Tibial artery (tissue), 4 donors: ENCODE measurements at regions of chr9 and their contacts with region 1.

Region 1: DNA sequence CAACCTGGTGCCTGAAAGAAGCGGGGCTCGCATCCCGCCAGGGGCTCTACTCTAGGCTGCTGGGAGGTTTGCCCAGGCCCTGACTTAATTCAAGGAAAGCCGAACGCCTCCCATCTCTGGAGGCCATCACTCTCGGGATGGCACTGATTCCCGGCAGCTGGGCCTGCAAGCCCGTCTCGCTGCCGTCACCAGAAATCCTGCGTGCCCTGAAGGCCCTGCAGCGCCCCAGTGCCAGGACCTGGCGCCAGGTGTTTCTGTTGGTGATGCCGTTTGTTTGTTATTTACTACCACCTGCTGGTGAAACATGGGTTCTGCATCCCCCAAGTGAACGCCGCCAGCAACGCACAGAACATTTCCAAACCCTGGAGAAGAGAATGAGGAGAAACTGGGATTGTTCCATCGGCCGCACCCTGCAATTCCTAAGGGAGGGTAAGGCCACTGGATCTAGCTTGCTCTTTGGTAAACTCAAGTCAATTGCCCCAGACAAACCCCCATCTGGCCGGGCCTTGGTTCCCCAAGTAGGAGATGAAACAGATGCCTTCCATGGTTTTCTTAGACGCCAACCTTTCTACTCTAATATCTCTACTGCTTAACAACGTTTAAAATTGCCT is 77.9 kb downstream of the AK8 start:
- DNase-seq: peak; percentile 72 to 77
- H3K4me3 ChIP-seq: no peak overlapping the region
- H3K27ac ChIP-seq: no peak overlapping the region
- H3K4me1 ChIP-seq: peaks cover 0 to 6% (median 0%) of the 10 kb centered on the region in 4 donors
- H3K27me3 ChIP-seq: peaks cover 0 to 34% of the 10 kb centered on the region in 2 donors
- CTCF ChIP-seq: peak; percentile 85 to 90

Region 2: DNA sequence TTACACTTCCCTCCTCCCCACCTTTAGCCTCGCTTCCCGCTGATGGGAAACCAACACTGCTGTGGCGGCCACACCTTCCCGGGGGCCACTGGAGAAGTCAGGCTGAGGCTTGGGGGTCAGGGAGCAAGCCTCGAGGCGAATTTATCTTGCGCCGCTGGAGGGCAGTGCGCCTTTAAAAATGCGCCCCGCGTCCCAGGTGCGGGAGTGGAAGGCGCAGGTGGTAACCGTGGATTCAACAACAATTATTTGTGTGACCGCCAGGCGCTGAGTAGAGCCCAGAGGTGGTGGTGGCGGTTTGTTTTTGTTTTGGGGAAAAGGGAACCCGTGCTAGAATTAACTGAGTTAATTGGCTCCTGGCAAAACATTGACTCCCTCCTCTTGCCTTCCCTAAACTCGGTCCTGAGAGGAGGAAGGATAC is 389.0 kb before region 1 on chr9:
- intact Hi-C with region 1: loop called (anchors 5 kb)
- DNase-seq: no peak
- H3K4me3 ChIP-seq: peak overlapping the region in 1 of 2 donors; percentile 54
- H3K27ac ChIP-seq: no peak overlapping the region
- H3K4me1 ChIP-seq: peaks cover 0 to 28% (median 18%) of the 10 kb centered on the region in 4 donors
- H3K27me3 ChIP-seq: peaks cover 5 to 64% of the 10 kb centered on the region in 2 donors
- CTCF ChIP-seq: peak; percentile 8 to 42

Region 3: DNA sequence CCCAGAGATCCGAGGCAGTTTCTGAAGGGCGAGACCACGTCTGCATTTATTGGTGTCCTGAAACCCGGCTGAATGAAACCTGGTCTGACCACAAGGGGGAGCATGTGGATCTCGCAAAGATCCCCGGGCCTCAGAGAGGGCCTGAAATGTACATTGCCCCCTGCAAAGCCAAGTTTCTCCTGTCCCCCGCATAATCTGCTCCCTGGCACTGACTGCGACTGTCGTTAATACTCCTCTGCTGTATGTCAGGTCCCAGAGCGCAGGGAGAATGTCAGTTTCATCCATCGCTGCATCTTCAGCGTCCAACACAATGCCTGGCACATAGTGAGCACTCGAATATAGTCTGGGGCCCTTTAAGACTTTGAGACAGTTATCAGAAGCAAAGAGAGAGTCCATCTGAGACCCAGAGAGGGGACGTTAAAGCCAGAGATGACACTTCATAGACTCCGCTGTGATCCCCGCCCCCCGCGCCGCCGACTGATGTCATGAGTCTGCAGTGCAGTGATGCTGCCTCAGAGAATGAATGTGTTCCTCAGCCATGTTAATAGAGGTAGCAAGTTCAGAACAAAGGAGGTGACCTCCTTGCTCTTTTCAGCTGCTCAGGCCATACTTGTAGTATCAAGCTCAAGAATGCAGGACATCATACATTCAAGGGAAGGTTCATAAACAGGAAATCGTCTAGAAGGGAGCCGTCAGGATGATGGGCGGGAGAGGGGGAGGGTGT is 292.2 kb before region 1 on chr9:
- intact Hi-C with region 1: loop called (anchors 5 kb)
- DNase-seq: peak in 1 of 2 donors; percentile 64
- H3K4me3 ChIP-seq: no peak overlapping the region
- H3K27ac ChIP-seq: no peak overlapping the region
- H3K4me1 ChIP-seq: no peaks in the 10 kb centered on the region
- H3K27me3 ChIP-seq: peaks cover 0 to 85% of the 10 kb centered on the region in 2 donors
- CTCF ChIP-seq: peak; percentile 65 to 72